ENCODE measurements at regions of chr6 and their contacts with region 1.

Region 1: DNA sequence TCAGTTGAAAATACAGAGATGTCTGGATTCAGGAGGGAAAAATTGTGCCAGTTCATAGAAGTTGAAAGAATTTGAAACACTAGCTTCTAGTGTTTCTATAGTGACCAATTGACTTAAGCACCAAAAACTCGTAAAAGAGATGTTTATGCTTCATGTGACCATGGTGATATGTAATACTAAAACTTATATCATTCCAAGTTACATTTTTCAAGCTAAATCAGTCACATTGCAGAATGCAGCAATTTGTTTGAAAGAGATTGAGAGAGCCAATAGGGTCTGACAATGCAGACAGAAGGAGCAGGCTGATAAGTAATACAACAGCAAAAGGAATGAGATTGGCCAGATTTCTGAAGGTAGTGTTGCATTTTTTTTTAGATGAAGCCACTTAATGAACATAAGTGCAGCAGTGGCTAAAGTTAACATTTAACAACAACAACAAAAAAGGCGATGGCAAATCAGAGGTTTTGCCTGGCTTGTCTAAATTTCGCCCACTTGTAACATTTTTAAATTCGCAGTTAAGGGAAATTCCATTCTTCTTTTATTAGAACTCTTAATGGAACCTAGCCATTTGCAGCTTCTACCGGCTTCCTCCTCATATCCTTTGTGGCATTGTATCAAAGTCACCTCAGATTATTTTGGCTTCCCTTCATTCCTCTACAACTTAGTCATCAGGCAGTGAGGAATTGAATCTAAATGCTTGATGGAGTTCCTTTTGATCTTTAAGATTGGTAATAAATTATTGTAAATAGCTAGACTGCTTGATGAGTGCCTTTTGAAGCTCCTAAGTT is 484.0 kb upstream of the SOX4 start:
- DNase-seq: peak; percentile 94
- H3K4me3 ChIP-seq: peak overlapping the region in 1 of 3 experiments; percentile 62
- H3K27ac ChIP-seq: peak overlapping the region; percentile 99
- H3K4me1 ChIP-seq: peaks cover 37% of the 10 kb centered on the region
- H3K27me3 ChIP-seq: no peaks in the 10 kb centered on the region
- CTCF ChIP-seq: no peak
- POLR2A ChIP-seq: no peak

Region 2: GRCh38 chr6:20564269-20564668 is 545.3 kb before region 1 on chr6:
- CTCF ChIA-PET with region 1: interaction called, 4 read pairs
- POLR2A ChIA-PET with region 1: no interaction called
- dilution Hi-C with region 1: no loop called
- intact Hi-C with region 1: loop called (anchors 10 kb)
- DNase-seq: peak; percentile 59
- H3K4me3 ChIP-seq: peak overlapping the region in 1 of 3 experiments; percentile 28
- H3K27ac ChIP-seq: peak overlapping the region; percentile 32
- H3K4me1 ChIP-seq: peaks cover 12% of the 10 kb centered on the region
- H3K27me3 ChIP-seq: no peaks in the 10 kb centered on the region
- CTCF ChIP-seq: peak; percentile 16 to 33
- POLR2A ChIP-seq: no peak

Region 3: DNA sequence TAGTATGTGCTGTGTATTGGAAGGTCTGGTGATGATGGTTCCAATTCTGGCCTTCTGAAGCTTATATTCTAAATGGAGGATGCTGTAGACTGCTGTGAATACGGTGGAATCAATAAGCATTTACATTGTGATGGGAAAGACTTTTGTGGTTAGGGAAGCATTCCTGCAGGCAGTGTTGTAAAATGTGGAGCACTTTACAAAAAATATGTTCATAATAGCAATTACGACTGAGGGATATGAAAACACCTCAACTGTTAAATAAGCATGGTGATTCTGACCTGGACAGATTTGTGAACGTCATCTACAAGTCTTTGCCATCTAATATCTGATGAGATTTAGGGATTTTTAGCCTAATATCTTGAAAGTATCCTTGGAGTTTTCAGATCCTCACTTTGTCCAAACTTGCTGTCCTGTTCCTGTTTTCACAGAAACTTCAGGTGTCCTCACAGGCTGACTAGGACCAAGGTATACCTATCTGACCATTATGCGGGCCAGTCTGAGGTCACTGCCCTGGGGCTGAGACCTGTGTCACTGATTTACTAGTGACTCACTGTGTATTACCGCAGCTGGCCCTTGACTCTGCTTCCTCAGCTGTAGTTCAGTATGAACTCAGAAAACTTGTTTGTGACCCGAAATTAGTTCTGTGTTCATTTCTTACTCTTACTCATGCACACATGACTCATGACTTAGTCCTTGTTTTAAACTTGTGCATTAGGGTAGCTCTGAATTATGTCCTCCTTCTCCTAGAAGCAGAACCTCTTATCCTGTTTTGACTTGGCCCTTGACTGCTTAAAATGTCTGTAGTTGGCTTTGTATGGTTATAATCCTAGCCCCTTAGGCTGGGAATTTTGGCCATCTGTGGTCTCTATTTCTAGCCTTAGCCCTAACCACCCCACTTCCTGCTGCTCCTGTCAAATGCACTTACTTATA is 232.3 kb before region 1 on chr6:
- CTCF ChIA-PET with region 1: interaction called, 3 read pairs
- POLR2A ChIA-PET with region 1: no interaction called
- dilution Hi-C with region 1: no loop called
- intact Hi-C with region 1: loop called (anchors 1 kb)
- DNase-seq: peak; percentile 94
- H3K4me3 ChIP-seq: no peak overlapping the region
- H3K27ac ChIP-seq: peak overlapping the region; percentile 85
- H3K4me1 ChIP-seq: peaks cover 38% of the 10 kb centered on the region
- H3K27me3 ChIP-seq: no peaks in the 10 kb centered on the region
- CTCF ChIP-seq: no peak
- POLR2A ChIP-seq: peak; percentile 8

Region 4: GRCh38 chr6:20978151-20978614 is 131.4 kb before region 1 on chr6:
- CTCF ChIA-PET with region 1: no interaction called
- POLR2A ChIA-PET with region 1: no interaction called
- dilution Hi-C with region 1: no loop called
- intact Hi-C with region 1: loop called (anchors 1 kb)
- DNase-seq: peak; percentile 93
- H3K4me3 ChIP-seq: no peak overlapping the region
- H3K27ac ChIP-seq: peak overlapping the region; percentile 40
- H3K4me1 ChIP-seq: peaks cover 18% of the 10 kb centered on the region
- H3K27me3 ChIP-seq: no peaks in the 10 kb centered on the region
- CTCF ChIP-seq: no peak
- POLR2A ChIP-seq: no peak

Region 5: GRCh38 chr6:21022343-21023107 is 87.1 kb before region 1 on chr6:
- CTCF ChIA-PET with region 1: no interaction called
- POLR2A ChIA-PET with region 1: no interaction called
- dilution Hi-C with region 1: no loop called
- intact Hi-C with region 1: loop called (anchors 1 kb)
- DNase-seq: peak; percentile 92
- H3K4me3 ChIP-seq: no peak overlapping the region
- H3K27ac ChIP-seq: peak overlapping the region; percentile 75
- H3K4me1 ChIP-seq: peaks cover 39% of the 10 kb centered on the region
- H3K27me3 ChIP-seq: no peaks in the 10 kb centered on the region
- CTCF ChIP-seq: no peak
- POLR2A ChIP-seq: no peak

Region 6: DNA sequence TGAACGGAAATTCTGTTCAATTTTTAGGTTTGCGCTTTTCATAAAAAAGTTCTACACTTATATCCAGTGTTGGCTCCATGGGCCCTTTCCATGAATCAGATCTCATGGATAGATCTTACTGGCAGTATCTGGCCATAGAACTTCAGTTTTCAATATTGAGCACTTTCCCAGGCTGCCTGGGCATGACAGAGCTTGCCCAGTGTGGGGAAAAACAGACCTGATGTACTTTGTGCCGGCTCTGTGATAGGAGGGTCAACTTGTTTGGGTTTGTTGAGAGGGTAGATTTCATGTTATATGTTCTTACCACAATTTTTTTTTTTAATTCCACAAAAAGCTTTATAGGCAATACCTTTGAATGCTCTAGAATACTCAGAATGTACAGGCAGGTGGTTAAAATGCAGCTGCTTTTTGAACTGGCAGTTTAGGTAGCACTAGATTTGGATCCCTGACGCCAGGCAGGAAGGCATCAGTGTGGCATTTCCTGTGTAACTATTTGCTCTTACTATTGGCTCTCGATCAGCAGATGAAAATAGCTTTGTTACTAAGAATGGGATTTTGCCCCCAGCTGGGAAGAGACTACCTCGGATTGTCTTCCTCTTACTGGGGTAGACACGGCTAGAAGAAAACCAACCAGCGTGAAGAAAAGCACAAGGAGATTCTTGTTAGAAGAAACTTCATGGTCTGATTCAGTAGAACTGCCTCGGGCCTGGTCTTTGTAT is 79.1 kb after region 1 on chr6:
- CTCF ChIA-PET with region 1: no interaction called
- POLR2A ChIA-PET with region 1: no interaction called
- dilution Hi-C with region 1: no loop called
- intact Hi-C with region 1: loop called (anchors 1 kb)
- DNase-seq: peak; percentile 64
- H3K4me3 ChIP-seq: no peak overlapping the region
- H3K27ac ChIP-seq: peak overlapping the region; percentile 71
- H3K4me1 ChIP-seq: peaks cover 35% of the 10 kb centered on the region
- H3K27me3 ChIP-seq: no peaks in the 10 kb centered on the region
- CTCF ChIP-seq: no peak
- POLR2A ChIP-seq: no peak

Region 7: GRCh38 chr6:21227486-21227885 is 117.9 kb after region 1 on chr6:
- CTCF ChIA-PET with region 1: no interaction called
- POLR2A ChIA-PET with region 1: no interaction called
- dilution Hi-C with region 1: no loop called
- intact Hi-C with region 1: no loop called
- DNase-seq: no peak
- H3K4me3 ChIP-seq: no peak overlapping the region
- H3K27ac ChIP-seq: no peak overlapping the region
- H3K4me1 ChIP-seq: no peaks in the 10 kb centered on the region
- H3K27me3 ChIP-seq: no peaks in the 10 kb centered on the region
- CTCF ChIP-seq: no peak
- POLR2A ChIP-seq: no peak